MCF 10A (cell line): ENCODE measurements at regions of chr11 and their contacts with region 1.

Region 1: GRCh38 chr11:30196400-30197206 is 34.2 kb upstream of the FSHB start:
- DNase-seq: peak; percentile 65
- H3K4me3 Mint-ChIP-seq: no peak overlapping the region
- H3K27ac Mint-ChIP-seq: peak overlapping the region; percentile 88
- H3K4me1 Mint-ChIP-seq: no peaks in the 10 kb centered on the region
- H3K27me3 Mint-ChIP-seq: no peaks in the 10 kb centered on the region
- CTCF ChIP-seq: peak; percentile 64

Region 2: GRCh38 chr11:29432719-29433325 is 763.8 kb before region 1 on chr11:
- CTCF ChIA-PET with region 1: interaction called, 13 read pairs
- POLR2A ChIA-PET with region 1: no interaction called
- intact Hi-C with region 1: no loop called
- DNase-seq: peak; percentile 47
- H3K4me3 Mint-ChIP-seq: no peak overlapping the region
- H3K27ac Mint-ChIP-seq: no peak overlapping the region
- H3K4me1 Mint-ChIP-seq: peaks cover 8% of the 10 kb centered on the region
- H3K27me3 Mint-ChIP-seq: no peaks in the 10 kb centered on the region
- CTCF ChIP-seq: peak; percentile 69

Region 3: DNA sequence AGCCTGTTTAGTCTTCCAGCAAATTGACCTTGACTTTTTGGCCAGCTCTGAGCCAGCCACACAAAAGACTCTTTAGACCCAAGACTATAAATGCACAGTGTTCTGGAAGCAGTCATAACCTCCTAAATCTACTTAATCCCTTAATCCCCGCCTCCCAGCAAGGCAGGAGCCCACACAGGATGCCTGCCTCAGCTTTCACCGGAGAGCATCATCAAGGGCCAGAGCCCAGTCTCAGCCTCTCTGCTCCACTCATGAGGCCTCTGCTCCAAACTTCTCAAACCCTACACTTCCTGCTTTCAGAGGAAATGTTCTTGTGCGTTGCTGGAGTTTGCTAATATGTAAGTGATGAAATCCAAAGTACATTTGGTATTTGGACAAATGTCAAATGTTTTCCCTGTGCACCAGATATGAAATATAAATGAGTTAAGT is 23.7 kb before region 1 on chr11:
- CTCF ChIA-PET with region 1: interaction called, 21 read pairs
- POLR2A ChIA-PET with region 1: no interaction called
- intact Hi-C with region 1: no loop called
- DNase-seq: no peak
- H3K4me3 Mint-ChIP-seq: no peak overlapping the region
- H3K27ac Mint-ChIP-seq: peak overlapping the region; percentile 33
- H3K4me1 Mint-ChIP-seq: no peaks in the 10 kb centered on the region
- H3K27me3 Mint-ChIP-seq: no peaks in the 10 kb centered on the region
- CTCF ChIP-seq: no peak

Region 4: DNA sequence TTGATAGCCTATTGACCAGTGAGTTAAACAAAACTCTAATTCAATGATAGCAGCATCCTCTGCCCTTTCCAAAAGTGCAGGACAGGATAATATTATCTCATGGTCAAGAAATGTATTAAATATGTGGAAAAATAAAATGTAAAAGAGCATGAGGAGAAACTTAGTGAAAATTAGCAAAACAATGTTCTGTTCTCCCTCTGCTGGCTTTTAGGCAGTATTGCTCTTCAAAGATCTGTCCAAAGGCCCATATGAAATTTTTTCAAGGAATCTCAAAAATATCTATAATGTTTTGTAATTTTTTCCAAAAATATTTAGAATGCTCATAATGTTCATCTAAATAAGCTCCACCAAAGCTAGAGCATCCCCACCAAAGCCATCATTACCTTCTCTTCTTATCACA is 118.0 kb after region 1 on chr11:
- CTCF ChIA-PET with region 1: interaction called, 30 read pairs
- POLR2A ChIA-PET with region 1: no interaction called
- intact Hi-C with region 1: loop called (anchors 5 kb)
- DNase-seq: no peak
- H3K4me3 Mint-ChIP-seq: no peak overlapping the region
- H3K27ac Mint-ChIP-seq: no peak overlapping the region
- H3K4me1 Mint-ChIP-seq: no peaks in the 10 kb centered on the region
- H3K27me3 Mint-ChIP-seq: peaks cover 12% of the 10 kb centered on the region
- CTCF ChIP-seq: peak; percentile 63

Region 5: DNA sequence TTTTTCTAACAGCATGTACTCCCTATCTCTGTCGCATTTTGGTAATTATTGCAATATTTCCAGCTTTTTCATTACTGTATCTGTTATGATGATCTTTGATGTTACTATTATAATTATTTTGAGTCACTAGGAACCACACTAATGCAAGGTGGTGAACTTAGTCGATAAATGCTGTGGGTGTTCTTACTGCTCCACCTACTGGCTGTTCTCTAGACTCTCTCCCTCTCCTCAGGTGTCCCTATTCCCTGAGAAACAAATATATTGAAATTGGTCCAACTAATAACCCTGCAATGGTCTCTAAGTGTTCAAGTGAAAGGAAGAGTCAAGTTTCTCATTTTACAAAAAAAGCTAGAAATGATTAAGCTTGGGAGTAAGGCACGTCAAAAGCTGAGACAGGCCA is 136.8 kb after region 1 on chr11:
- CTCF ChIA-PET with region 1: interaction called, 10 read pairs
- POLR2A ChIA-PET with region 1: no interaction called
- intact Hi-C with region 1: no loop called
- DNase-seq: peak; percentile 25
- H3K4me3 Mint-ChIP-seq: no peak overlapping the region
- H3K27ac Mint-ChIP-seq: no peak overlapping the region
- H3K4me1 Mint-ChIP-seq: peaks cover 10% of the 10 kb centered on the region
- H3K27me3 Mint-ChIP-seq: no peaks in the 10 kb centered on the region
- CTCF ChIP-seq: peak; percentile 34